ENCODE measurements at regions of chr4 and their contacts with region 1.

Region 1: GRCh38 chr4:40199999-40200874 is 3.4 kb downstream of the RHOH start:
- DNase-seq: peak; percentile 76
- H3K4me3 Mint-ChIP-seq: peak overlapping the region; percentile 95
- H3K27ac Mint-ChIP-seq: peak overlapping the region; percentile 97
- H3K4me1 Mint-ChIP-seq: peaks cover 60% of the 10 kb centered on the region
- H3K27me3 Mint-ChIP-seq: no peaks in the 10 kb centered on the region

Region 2: DNA sequence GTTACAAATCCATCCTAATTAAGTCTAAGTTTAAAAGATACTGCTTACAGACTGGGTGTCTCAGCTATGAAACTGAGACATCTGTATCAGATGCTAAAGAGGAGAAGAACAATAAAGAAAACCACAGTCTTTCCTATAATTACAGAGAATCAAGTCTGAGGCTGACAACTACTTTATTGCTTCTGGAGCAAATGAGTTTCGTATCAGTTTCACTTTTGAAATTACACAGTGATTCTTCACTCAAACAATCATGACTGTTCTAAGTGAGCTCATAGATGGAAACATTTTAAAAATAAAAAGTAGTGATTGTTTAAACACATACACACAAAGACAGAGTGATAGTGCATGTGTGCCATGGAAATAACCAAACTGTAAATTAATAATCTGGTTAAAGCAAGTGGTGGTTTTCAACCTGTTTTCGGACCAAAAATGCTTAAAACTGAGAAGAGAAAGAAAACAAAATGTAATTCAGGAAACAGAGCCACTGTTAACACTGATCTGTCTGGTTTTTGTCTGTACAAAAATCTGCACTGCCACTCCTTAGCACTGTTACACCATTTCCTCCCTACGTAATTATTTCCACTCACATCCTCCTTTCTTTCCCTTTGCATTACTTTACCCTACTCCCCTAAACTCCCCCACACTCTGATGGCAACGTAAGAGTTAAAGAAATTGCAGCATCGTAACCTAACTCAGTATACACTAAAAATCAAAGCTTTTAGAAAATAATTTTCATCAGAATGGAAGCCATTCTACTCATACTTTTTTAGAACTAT is 846.6 kb before region 1 on chr4:
- intact Hi-C with region 1: loop called (anchors 5 kb)
- DNase-seq: peak; percentile 32
- H3K4me3 Mint-ChIP-seq: peak overlapping the region; percentile 80
- H3K27ac Mint-ChIP-seq: peak overlapping the region; percentile 96
- H3K4me1 Mint-ChIP-seq: peaks cover 63% of the 10 kb centered on the region
- H3K27me3 Mint-ChIP-seq: no peaks in the 10 kb centered on the region

Region 3: DNA sequence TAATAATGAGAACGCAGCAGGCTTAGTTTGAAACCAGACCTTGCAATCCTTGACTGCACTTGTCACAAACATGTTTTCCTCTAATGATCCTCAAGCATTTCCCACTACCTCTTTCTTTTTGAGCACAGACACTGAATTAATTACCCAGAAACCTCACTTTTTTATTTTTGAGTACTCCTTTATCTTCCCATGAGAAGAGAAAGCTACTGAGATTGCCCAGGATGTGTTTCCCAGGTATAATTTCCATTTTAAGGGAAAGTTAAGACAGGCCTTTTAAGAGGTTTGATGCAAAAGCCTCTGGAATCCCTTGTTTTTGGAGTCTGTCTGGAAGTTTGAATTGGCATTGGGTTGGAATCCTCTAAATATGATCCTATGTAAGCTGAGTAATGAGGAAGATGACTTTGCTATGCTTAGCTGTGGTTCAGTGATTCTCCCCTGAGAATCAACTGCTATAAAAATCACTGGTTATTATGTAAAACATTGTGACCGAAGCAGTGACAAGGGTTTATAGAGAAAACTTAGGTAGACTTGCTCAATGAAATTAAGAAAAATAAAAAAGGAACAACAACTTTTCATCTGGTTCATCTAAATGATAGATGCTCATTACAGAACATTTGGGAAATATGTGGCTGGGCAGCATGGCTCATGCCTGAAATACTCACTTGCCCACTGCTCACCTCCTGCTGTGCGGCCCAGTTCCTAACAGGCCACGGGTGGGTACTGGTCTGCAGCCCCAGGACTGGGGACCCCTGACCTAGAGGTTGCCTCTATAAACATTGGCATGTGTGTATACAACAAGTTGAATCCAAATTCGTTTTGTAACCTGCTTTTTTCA is 14.2 kb before region 1 on chr4:
- intact Hi-C with region 1: loop called (anchors 2 kb)
- DNase-seq: no peak
- H3K4me3 Mint-ChIP-seq: no peak overlapping the region
- H3K27ac Mint-ChIP-seq: no peak overlapping the region
- H3K4me1 Mint-ChIP-seq: peaks cover 48% of the 10 kb centered on the region
- H3K27me3 Mint-ChIP-seq: no peaks in the 10 kb centered on the region

Region 4: DNA sequence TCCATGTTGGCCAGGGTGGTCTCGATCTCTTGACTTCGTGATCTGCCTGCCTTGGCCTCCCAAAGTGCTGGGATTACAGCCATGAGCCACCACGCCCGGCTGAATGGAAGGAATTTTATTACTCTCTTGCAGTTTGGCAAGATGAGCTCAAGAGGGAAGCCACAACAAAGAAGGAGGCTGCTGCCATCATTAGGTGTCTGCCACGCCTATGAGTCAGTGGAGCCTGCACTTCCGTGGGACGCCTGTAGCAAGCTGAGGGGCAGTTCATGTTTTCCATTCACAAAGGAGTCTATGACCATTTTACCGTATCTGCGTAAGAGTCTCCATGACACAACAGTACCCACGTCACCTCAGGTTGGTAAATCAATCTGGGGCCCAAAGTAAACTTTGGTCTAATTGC is 83.7 kb after region 1 on chr4:
- intact Hi-C with region 1: loop called (anchors 1 kb)
- DNase-seq: peak; percentile 54
- H3K4me3 Mint-ChIP-seq: peak overlapping the region; percentile 32
- H3K27ac Mint-ChIP-seq: peak overlapping the region; percentile 84
- H3K4me1 Mint-ChIP-seq: peaks cover 56% of the 10 kb centered on the region
- H3K27me3 Mint-ChIP-seq: no peaks in the 10 kb centered on the region

Region 5: GRCh38 chr4:40333921-40334352 is 133.7 kb after region 1 on chr4:
- intact Hi-C with region 1: no loop called
- DNase-seq: no peak
- H3K4me3 Mint-ChIP-seq: no peak overlapping the region
- H3K27ac Mint-ChIP-seq: no peak overlapping the region
- H3K4me1 Mint-ChIP-seq: no peaks in the 10 kb centered on the region
- H3K27me3 Mint-ChIP-seq: no peaks in the 10 kb centered on the region

Region 6: GRCh38 chr4:40629401-40630334 is 429.4 kb after region 1 on chr4 and contains the start of gene RBM47:
- intact Hi-C with region 1: loop called (anchors 5 kb)
- DNase-seq: peak; percentile 12
- H3K4me3 Mint-ChIP-seq: peak within 1 kb of the TSS; percentile 92
- H3K27ac Mint-ChIP-seq: peak within 1 kb of the TSS; percentile 84
- H3K4me1 Mint-ChIP-seq: peaks cover 41% of the 10 kb centered on the region
- H3K27me3 Mint-ChIP-seq: peaks cover 2% of the 10 kb centered on the region
- total RNA-seq, gene RBM47: 20.3 and 21.4 TPM in 2 replicates

Region 7: GRCh38 chr4:40908702-40909362 is 708.6 kb after region 1 on chr4:
- intact Hi-C with region 1: loop called (anchors 5 kb)
- DNase-seq: peak; percentile 61
- H3K4me3 Mint-ChIP-seq: peak overlapping the region; percentile 43
- H3K27ac Mint-ChIP-seq: peak overlapping the region; percentile 91
- H3K4me1 Mint-ChIP-seq: peaks cover 34% of the 10 kb centered on the region
- H3K27me3 Mint-ChIP-seq: no peaks in the 10 kb centered on the region